GM10248 (cell line): ENCODE measurements at regions of chr10 and their contacts with region 1.

Region 1: GRCh38 chr10:34994565-34995142 is 95.5 kb downstream of the CUL2 start:
- DNase-seq: peak; percentile 81
- CTCF ChIP-seq: peak; percentile 55

Region 2: DNA sequence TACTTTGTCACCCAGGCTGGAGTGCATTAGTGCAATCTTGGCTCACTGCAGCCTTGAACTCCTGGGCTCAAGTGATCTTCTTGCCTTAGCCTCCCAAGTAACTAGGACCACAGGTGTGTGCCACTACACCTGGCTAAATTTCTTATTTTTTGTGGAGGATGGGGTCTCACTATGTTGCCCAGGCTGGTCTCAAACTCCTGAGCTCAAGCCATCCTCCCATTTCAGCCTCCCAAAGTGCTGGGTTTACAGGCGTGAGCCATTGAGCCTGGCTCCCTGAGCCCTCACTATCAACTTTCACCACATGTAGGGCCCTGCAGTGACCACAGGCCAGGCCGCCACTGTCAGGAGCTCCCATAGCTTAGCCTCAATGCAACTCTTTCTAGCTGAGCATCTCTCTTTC is 14.7 kb before region 1 on chr10:
- CTCF ChIA-PET with region 1: interaction called, 24 read pairs
- POLR2A ChIA-PET with region 1: no interaction called
- DNase-seq: no peak
- CTCF ChIP-seq: no peak

Region 3: DNA sequence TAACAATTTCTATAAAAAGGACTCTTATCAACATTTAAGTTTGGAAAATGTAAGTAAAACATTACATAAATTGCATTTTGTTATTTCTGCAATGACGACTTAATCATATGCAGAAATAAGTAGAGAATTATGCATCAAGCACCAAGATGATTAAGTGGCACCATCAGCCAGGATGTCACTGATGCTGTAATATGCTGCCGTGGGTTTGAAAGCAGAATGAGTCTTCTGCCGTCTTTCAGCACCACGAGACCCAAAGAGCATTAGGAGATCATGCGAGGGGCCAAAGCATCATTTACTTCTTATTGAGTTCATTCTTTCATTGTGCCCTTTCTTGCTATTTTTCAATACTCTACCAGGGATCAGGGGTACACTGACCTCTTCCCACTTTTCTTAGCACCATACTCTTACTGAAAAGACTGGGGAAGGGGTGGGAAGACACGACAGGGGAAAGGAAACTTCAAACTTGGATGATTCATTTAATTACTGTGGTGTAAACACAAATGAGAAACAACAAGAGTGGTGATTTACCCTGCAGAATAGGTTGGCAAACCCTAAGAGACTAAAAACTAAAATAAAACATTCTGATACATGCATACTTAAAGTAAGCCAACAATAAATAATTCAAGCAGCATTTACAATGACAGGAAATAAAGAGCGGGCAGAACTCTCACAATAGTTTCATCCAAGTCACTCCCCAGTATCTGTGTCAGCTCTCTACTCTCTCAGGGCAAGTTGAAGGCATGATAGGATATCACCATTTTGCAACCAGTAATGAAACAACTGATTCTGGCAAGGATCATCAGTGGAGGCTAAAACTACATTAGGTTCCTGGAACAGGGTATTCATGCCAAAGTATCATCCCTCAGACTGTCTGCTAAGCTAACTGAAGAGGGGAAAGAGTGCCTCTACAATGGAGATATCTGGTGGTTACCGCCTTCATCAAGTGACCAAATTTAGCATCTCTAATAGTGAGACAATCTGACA is 24.7 kb after region 1 on chr10:
- CTCF ChIA-PET with region 1: interaction called, 12 read pairs
- POLR2A ChIA-PET with region 1: no interaction called
- DNase-seq: no peak
- CTCF ChIP-seq: no peak

Region 4: GRCh38 chr10:35119378-35119777 is 124.7 kb after region 1 on chr10:
- CTCF ChIA-PET with region 1: interaction called, 11 read pairs
- POLR2A ChIA-PET with region 1: no interaction called
- DNase-seq: no peak
- CTCF ChIP-seq: no peak

Region 5: DNA sequence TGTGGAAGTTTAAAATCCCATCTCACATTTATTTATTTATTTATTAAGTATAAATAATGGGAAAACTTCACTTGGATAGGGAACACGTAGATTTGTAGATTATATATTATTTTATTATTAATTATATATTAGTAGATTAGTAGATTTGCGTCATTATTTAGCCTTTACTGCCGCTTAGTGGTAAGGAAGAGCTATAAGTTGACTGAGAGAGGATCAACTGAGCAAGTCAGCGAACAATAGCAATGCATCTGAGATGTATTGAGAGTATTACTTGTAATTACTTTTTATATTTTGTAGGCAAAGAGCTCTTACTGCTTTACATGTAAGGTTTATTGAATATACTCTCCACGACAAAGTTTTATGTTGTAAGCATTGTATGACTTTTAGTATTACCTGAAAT is 1886.2 kb after region 1 on chr10:
- CTCF ChIA-PET with region 1: interaction called, 11 read pairs
- POLR2A ChIA-PET with region 1: no interaction called
- DNase-seq: no peak
- CTCF ChIP-seq: peak; percentile 38